B cell (primary cell): ENCODE measurements at regions of chr11 and their contacts with region 1.

Region 1: DNA sequence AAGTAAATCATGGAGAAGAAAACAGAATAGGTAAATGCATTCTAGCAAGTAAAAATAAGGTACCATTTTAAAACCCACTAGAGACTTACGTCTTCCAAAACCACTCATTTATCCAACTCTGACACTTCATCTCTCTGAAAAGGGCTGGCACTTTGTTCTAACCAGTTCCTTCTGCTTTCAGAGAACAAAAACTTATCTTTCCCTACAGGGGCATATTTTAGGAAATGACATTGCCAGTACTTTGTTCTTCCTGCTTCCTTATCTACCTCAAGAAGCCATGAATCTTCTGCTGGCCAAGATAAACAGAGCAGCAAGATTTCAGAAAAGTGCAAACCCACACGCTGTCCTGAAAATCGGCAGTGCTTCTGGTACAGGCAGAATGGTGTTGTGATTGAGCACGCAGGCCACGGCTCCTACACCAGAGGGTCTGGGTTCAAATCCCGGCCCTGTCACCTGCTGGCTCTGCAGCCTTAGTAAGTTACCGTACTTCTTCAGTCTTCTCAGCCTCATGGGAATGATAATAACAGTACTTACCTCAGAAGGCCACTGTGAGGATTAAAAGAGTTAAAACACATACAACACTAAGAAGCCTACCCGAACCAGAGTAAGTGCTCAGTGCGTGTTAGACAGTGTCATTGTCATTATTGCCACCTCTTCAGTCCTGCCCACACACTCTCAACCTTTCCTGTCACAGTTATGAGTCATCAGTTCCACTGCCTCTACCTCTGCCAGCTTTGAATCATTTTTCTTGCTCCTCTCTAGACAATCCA is 11.0 kb downstream of the MPZL3 start:
- DNase-seq: no peak
- ATAC-seq: peak; percentile 91
- H3K4me3 ChIP-seq: peak overlapping the region in 1 of 5 experiments; percentile 1
- H3K4me3 Mint-ChIP-seq: peak overlapping the region; percentile 5
- H3K27ac ChIP-seq: no peak overlapping the region
- H3K27ac Mint-ChIP-seq: no peak overlapping the region
- H3K4me1 ChIP-seq: peaks cover 15 to 21% of the 10 kb centered on the region in 2 donors
- H3K4me1 Mint-ChIP-seq: peaks cover 39% of the 10 kb centered on the region
- H3K27me3 ChIP-seq: no peaks in the 10 kb centered on the region
- H3K27me3 Mint-ChIP-seq: peaks cover 4% of the 10 kb centered on the region
- CTCF ChIP-seq: no peak

Region 2: GRCh38 chr11:118206391-118207031 is 34.7 kb before region 1 on chr11:
- CTCF ChIA-PET with region 1: no interaction called
- POLR2A ChIA-PET with region 1: no interaction called
- intact Hi-C with region 1: loop called (anchors 5 kb)
- DNase-seq: no peak
- ATAC-seq: no peak
- H3K4me3 ChIP-seq: no peak overlapping the region
- H3K4me3 Mint-ChIP-seq: no peak overlapping the region
- H3K27ac ChIP-seq: no peak overlapping the region
- H3K27ac Mint-ChIP-seq: no peak overlapping the region
- H3K4me1 ChIP-seq: peaks cover 10 to 11% of the 10 kb centered on the region in 2 donors
- H3K4me1 Mint-ChIP-seq: peaks cover 13% of the 10 kb centered on the region
- H3K27me3 ChIP-seq: peaks cover 0 to 2% (median 0%) of the 10 kb centered on the region in 4 experiments
- H3K27me3 Mint-ChIP-seq: peaks cover 32% of the 10 kb centered on the region
- CTCF ChIP-seq: no peak